Motor neuron (in vitro differentiated cells): ENCODE measurements at regions of chr5 and their contacts with region 1.

Region 1: GRCh38 chr5:115831163-115831768 is 10.1 kb downstream of the ATG12 start:
- ATAC-seq: peak in 3 of 8 experiments; percentile 28 to 46 (median 40)
- H3K4me3 ChIP-seq: no peak overlapping the region
- H3K27ac ChIP-seq: no peak overlapping the region
- H3K4me1 ChIP-seq: no peaks in the 10 kb centered on the region

Region 2: DNA sequence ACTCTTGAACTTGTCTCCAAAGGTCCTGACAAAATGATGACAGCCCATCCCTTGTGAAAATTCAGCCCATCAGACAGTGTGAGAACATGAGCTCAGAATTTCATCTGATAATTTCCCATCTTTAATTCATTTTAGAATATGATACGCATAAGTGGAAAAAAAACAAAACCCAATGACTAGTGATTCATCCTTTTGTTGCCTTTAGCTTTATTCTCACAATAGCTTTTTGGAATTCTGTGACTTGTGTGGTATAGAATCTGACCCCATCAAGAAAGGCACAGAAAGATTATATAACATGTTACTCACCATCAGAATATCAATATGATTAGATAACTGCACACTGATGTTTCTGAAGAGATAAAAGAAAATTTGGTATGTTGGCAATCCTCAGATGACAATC is 189.3 kb before region 1 on chr5:
- in situ Hi-C with region 1: loop called in 1 of 9 experiments (anchors 10 kb)
- ATAC-seq: no peak
- H3K4me3 ChIP-seq: no peak overlapping the region
- H3K27ac ChIP-seq: no peak overlapping the region
- H3K4me1 ChIP-seq: no peaks in the 10 kb centered on the region

Region 3: DNA sequence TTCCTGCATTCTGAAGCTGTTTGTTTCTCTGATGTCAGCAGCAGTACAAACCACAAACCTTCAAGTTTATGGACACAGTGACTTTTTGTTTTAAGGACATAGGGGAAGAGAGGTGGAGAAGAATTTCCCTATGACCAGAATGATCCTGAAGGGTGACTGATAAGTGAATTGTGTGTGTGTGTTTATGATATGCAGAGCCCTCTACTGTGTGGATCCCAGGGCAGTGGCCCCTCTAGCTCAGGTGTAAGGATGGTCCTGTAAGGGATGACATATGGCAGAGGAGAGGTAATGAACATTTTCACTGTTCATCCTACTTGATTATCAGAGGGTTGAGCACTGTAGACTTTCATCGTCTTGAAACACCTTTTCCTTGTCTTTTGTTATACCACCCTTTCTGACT is 174.9 kb before region 1 on chr5:
- in situ Hi-C with region 1: no loop called
- ATAC-seq: no peak
- H3K4me3 ChIP-seq: no peak overlapping the region
- H3K27ac ChIP-seq: no peak overlapping the region
- H3K4me1 ChIP-seq: peaks cover 0 to 4% of the 10 kb centered on the region in 2 donors